A549 (cell line): ENCODE measurements at regions of chr9 and their contacts with region 1.

Region 1: GRCh38 chr9:34994260-34994899 is 4.8 kb downstream of the DNAJB5 start:
- DNase-seq: peak; percentile 58 to 78
- ATAC-seq: peak; percentile 49 to 64; a peak in 5 of 6 replicates
- H3K4me3 ChIP-seq: no peak overlapping the region
- H3K27ac ChIP-seq: no peak overlapping the region; a peak in 1 of 6 replicates
- H3K4me1 ChIP-seq: peaks cover 39% of the 10 kb centered on the region
- CTCF ChIP-seq: peak; percentile 52
- EP300 ChIP-seq: no peak
- POLR2A ChIP-seq: no peak
- RAD21 ChIP-seq: peak; percentile 47 to 65; a peak in 4 of 5 replicates

Region 2: DNA sequence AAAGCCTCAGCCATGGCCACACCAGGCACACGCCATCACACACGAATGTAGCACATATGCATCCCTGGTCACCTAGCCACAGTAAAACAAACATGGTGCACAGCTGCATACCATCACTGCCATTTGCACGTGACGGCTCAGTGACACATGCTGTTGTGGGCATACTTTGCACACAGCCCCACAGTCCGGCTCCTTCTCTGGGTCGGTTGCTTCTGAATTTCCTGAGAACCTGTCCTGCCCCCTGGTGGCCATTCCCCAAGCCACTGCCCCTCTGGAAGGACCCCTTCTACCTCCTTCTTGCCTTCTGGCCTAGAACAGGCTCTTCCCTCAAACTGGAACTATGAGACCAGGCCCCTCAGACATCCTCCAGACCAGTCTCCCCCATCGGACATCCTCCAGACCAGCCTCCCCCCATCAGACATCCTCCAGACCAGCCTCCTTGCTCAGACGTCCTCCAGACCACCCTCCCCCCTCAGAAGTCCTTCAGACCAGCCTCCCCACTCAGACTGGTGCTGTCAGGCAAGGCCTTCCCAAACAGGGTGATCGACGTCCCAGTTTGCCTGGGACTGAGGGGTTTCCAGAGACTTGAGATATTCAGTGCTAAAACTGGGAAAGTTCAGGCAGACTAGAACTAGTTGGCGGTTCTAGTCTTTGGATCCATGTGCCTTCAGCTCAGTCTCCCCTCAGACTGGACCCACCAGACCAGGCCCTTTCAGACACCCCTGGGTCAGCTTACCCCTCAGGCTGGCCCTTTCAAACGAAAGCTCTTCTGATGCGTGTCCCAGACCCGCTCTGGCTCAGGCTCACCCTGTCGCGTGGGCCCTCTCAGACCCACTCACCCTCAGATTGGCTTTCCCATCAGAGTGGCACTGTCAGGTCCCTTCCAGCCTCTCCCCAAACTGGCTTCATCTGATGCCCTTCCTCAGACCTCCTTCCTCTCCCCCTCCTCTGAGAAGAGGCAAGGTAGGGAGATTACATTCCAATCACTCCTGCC is 447.2 kb before region 1 on chr9:
- CTCF ChIA-PET with region 1: no interaction called
- POLR2A ChIA-PET with region 1: no interaction called
- DNase-seq: peak; percentile 66 to 78
- ATAC-seq: peak; percentile 83 to 91
- H3K4me3 ChIP-seq: no peak overlapping the region
- H3K27ac ChIP-seq: no peak overlapping the region
- H3K4me1 ChIP-seq: peaks cover 9% of the 10 kb centered on the region; the same call in 1 of the 3 replicates
- CTCF ChIP-seq: peak; percentile 65
- EP300 ChIP-seq: no peak
- POLR2A ChIP-seq: no peak
- RAD21 ChIP-seq: peak; percentile 61 to 72

Region 3: DNA sequence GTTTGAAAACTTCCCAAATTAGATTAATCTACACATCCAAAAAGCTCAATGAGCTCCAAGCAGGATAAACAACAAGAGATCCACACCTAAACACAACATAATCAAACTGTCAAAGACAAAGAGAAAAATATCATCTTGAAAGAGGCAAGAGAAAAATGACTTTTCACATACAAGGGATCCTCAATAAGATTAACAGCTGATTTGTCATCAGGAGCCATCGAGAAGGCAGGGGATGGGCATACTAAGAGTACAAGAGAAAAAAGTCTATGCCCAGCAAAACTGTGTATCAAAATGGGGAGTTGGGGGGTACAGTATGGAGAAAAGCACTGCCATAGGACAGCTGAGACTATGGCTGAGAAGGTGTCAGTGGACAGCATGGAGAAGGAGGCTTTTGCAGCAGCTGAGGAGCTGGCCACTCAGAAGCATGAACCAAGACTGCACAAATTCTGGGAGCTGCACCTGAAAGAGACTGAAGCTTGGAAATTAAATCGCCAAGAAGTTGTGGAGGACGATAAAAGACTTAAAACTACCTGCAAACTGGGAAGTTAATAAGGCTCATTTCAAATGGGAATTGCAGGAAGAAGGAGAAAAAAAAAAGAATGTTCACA is 16.1 kb after region 1 on chr9:
- CTCF ChIA-PET with region 1: interaction called, 15 read pairs
- POLR2A ChIA-PET with region 1: no interaction called
- DNase-seq: no peak
- ATAC-seq: no peak
- H3K4me3 ChIP-seq: no peak overlapping the region
- H3K27ac ChIP-seq: no peak overlapping the region
- H3K4me1 ChIP-seq: no peaks in the 10 kb centered on the region
- CTCF ChIP-seq: no peak
- EP300 ChIP-seq: no peak
- POLR2A ChIP-seq: no peak
- RAD21 ChIP-seq: no peak

Region 4: GRCh38 chr9:35237311-35237710 is 242.9 kb after region 1 on chr9:
- CTCF ChIA-PET with region 1: no interaction called
- POLR2A ChIA-PET with region 1: no interaction called
- DNase-seq: no peak
- ATAC-seq: no peak
- H3K4me3 ChIP-seq: no peak overlapping the region
- H3K27ac ChIP-seq: no peak overlapping the region
- H3K4me1 ChIP-seq: peaks cover 13% of the 10 kb centered on the region; the same call in 2 of the 3 replicates
- CTCF ChIP-seq: no peak
- EP300 ChIP-seq: no peak
- POLR2A ChIP-seq: no peak
- RAD21 ChIP-seq: no peak